A549 (cell line): ENCODE measurements at regions of chr1 and their contacts with region 1.

Region 1: GRCh38 chr1:26190373-26190987 is at the start of gene CATSPER4:
- DNase-seq: peak; percentile 44 to 57
- ATAC-seq: peak; percentile 62 to 81; a peak in 5 of 6 replicates
- H3K4me3 ChIP-seq: no peak within 1 kb of the TSS
- H3K27ac ChIP-seq: no peak within 1 kb of the TSS
- H3K4me1 ChIP-seq: no peaks in the 10 kb centered on the region
- CTCF ChIP-seq: no peak
- EP300 ChIP-seq: no peak
- POLR2A ChIP-seq: no peak
- RAD21 ChIP-seq: peak in 1 of 2 experiments; percentile 31; a peak in 1 of 5 replicates
- polyA plus RNA-seq, gene CATSPER4: not detected in 2 replicates

Region 2: DNA sequence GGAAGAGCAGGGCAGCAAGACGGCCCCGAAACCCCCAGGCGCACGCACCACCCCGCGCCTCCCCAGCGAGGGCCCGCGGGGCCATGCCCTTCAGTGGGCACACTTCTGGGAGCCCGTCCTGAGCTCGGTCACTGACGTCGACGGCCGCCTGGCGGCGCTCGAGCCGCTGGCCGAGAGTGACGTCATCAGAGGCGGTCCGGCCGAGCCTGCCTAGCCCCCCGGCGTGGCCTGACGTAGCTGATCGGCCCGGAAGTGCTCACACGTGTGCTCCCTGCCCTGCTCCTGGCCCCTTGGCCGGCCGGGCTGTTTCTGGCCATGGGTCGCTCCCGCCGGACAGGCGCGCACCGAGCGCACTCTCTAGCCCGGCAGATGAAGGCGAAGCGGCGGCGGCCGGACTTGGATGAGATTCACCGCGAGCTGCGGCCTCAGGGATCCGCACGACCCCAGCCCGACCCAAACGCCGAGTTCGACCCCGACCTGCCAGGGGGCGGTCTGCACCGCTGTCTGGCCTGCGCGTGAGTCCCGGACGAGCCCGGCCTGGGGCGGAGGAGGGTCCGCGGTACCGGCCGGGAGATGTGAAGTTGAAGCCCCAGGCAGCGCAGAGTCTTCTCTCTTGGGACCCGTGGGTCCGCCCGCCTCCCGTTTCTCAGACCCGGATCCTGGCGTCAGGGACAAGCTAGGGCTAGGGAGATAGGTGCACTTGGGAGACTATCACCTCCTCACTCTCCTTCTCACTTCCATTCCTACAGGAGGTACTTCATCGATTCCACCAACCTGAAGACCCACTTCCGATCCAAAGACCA is 20.6 kb before region 1 on chr1 and contains the start of gene ZNF593:
- CTCF ChIA-PET with region 1: interaction called, 13 read pairs
- POLR2A ChIA-PET with region 1: no interaction called
- DNase-seq: peak; percentile 85 to 91
- ATAC-seq: peak; percentile 91 to 96
- H3K4me3 ChIP-seq: peak within 1 kb of the TSS; percentile 95
- H3K27ac ChIP-seq: peak within 1 kb of the TSS; percentile 90 to 99
- H3K4me1 ChIP-seq: peaks cover 7% of the 10 kb centered on the region; the same call in 2 of the 3 replicates
- CTCF ChIP-seq: peak; percentile 77
- EP300 ChIP-seq: no peak
- POLR2A ChIP-seq: peak; percentile 81
- RAD21 ChIP-seq: peak; percentile 17 to 48; a peak in 4 of 5 replicates
- polyA plus RNA-seq, gene ZNF593: 25.6 and 27.2 TPM in 2 replicates